ENCODE measurements at regions of chr5 and their contacts with region 1.

Region 1: DNA sequence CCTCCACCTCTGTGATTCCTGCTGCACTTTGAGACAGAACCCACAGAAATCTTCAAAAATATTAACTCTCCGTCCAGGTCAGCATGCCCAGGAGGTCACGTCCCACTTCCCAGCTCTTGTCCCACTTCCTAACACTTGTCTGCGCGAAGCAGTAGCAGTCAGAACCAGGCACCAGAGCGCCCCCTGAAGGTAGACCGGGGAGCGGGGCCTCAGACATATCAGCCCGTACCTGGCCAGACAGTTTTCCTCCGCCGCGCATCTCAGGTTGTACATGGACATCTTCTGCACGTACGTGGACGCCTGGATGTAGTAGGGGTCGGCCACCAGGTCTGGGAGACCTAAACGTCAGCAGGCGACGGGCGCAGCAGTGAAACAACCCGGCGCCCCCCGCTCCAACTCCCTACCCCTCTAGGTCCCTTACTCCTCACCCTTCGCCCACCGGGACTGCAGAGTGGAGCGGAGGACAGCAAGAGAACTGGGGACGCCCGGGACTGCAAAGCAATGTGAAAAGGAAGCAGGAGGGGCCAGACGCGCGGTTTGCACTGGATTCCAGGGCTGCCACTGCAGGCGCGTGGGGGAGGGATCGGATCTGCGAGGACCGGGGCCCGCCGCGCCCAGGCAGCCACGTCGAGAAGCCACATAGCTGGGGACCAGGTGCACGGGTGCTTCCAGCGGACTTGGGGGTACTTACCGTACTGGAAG is 1.2 kb downstream of the LOX start:
- DNase-seq: peak; percentile 75
- H3K4me3 ChIP-seq: peak overlapping the region; percentile 41 to 73 (median 69)
- H3K27ac ChIP-seq: peak overlapping the region; percentile 53
- H3K4me1 ChIP-seq: peaks cover 30% of the 10 kb centered on the region
- H3K27me3 ChIP-seq: no peaks in the 10 kb centered on the region
- CTCF ChIP-seq: peak; percentile 84 to 95

Region 2: DNA sequence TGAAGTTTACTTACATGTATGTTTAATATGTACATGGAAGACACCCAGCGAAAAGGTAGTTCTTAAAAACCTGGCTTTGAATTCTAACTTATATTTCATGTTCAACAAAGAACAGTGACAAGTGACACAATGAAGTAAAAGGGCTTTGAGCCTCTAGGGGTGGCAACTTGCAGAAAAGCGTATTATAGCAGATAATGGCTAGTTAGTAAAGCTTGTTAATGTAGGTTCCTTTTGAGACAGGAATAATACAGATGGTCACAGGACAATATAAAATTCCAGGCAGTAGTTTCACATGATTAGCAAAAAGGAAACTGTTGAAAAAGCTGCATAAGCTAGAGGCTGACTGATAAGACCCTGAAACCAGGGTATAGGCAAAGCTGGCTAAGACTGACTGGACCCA is 357.6 kb before region 1 on chr5:
- CTCF ChIA-PET with region 1: no interaction called
- dilution Hi-C with region 1: no loop called
- in situ Hi-C with region 1: no loop called
- intact Hi-C with region 1: no loop called
- DNase-seq: no peak
- H3K4me3 ChIP-seq: no peak overlapping the region
- H3K27ac ChIP-seq: no peak overlapping the region
- H3K4me1 ChIP-seq: no peaks in the 10 kb centered on the region
- H3K27me3 ChIP-seq: no peaks in the 10 kb centered on the region
- CTCF ChIP-seq: no peak

Region 3: DNA sequence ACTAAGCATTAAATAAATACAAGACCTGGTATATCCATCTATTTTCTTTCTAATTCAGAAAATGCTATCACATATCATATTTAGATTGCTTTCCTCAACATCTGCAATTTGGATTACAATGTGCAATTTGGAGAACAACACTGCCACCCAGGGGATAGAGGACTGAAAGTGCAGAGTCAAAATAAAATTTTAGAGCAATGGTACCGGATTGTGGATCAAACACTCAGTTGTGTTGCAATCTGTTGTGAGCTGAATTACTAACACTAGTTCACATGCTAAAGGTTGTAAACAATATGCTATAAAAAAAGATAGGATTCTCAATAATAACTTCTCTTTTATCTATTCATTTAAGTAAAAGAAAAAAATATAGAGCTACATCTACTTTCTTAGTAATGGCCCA is 126.9 kb before region 1 on chr5:
- CTCF ChIA-PET with region 1: interaction called, 3 read pairs
- dilution Hi-C with region 1: no loop called
- in situ Hi-C with region 1: loop called in 1 of 2 experiments (anchors 25 kb)
- intact Hi-C with region 1: no loop called
- DNase-seq: peak; percentile 30
- H3K4me3 ChIP-seq: no peak overlapping the region
- H3K27ac ChIP-seq: no peak overlapping the region
- H3K4me1 ChIP-seq: no peaks in the 10 kb centered on the region
- H3K27me3 ChIP-seq: no peaks in the 10 kb centered on the region
- CTCF ChIP-seq: peak; percentile 65 to 75

Region 4: DNA sequence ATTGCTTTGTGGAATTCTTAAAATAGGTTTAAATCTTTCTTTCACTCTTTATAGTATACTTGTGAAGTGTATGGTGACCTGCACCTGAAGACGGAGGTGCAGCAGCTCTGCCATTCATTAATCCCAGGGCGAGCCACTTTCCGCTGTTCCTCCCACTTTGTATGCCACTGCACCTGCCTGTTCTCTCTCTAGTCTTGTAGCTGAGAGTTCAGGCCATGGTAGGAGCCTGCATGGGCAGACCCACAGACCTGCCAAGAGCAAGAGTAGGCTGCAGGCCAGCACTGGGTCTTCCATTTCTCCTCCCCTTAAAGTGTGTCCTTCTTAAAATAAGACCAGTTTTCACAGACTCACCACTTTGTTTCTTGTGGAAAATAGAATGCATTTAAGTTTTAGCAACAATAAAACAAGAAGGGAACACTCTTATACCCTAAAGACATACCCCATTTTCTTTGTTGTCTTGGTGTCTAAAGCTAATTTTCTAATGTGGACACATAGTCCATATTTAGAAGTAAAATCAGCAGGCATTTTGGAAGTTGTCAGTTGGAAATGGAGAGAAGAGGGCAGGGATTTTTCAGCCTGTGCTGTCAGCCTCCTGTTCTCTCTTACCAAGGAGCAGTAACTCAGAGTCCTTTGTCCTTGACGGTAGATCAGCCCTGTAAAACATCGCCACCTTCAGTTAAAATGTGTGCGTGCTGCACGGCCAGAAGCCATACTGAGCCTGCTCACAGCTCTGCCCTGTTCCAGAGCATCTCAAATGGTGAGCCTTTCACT is 338.4 kb after region 1 on chr5:
- CTCF ChIA-PET with region 1: no interaction called
- dilution Hi-C with region 1: no loop called
- in situ Hi-C with region 1: loop called in 1 of 2 experiments (anchors 25 kb)
- intact Hi-C with region 1: no loop called
- DNase-seq: peak; percentile 41
- H3K4me3 ChIP-seq: no peak overlapping the region
- H3K27ac ChIP-seq: no peak overlapping the region
- H3K4me1 ChIP-seq: no peaks in the 10 kb centered on the region
- H3K27me3 ChIP-seq: peaks cover 1% of the 10 kb centered on the region
- CTCF ChIP-seq: peak; percentile 61 to 84